Panc1 (cell line): ENCODE measurements at regions of chr1 and their contacts with region 1.

Region 1: DNA sequence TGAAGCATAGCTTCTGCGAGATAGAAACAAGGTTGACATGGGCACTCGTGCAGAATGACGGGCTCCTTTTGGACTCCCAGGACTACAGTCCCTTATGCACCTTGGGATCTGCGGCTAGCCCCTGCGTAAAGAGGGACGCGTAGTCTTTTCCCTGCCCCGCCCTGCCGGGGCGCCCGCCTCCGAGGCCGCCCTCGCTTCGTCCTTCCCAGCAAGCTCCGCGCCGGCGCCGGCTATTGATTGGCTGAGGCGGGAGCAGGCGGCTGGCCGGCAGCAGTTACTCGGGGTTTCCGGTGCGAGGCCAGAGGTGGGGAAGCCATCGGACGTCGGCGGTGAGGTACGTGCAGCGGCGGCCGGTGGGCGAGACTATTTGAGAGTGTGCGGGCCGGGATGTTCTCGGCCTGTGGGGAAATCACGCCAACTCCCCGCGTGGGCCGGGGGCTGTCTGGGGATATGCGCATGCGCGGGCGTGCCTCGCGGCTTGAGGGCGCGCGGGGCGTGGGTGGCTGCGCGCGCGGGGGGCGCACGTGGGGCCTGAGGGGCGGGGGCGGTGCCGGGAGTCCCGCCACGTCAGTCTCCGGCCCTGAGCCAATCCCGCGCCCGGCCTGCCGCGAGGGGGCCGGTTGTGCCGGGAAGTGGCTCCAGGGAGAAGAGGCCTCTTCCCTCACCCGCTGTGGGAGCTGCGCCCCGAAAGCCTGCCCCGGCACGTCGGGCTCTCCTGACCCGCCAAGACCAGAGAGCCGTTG is at the start of gene TXLNA:
- DNase-seq: peak; percentile 63
- ATAC-seq: peak; percentile 96
- H3K4me3 ChIP-seq: peak within 1 kb of the TSS; percentile 77 to 93
- H3K27ac ChIP-seq: peak within 1 kb of the TSS; percentile 97
- H3K4me1 ChIP-seq: peaks cover 33% of the 10 kb centered on the region
- H3K27me3 ChIP-seq: no peaks in the 10 kb centered on the region
- CTCF ChIP-seq: no peak
- total RNA-seq, gene TXLNA: 115 TPM

Region 2: GRCh38 chr1:32031578-32032274 is 147.9 kb before region 1 on chr1:
- CTCF ChIA-PET with region 1: no interaction called
- POLR2A ChIA-PET with region 1: no interaction called
- in situ Hi-C with region 1: no loop called
- intact Hi-C with region 1: no loop called
- DNase-seq: no peak
- ATAC-seq: no peak
- H3K4me3 ChIP-seq: no peak overlapping the region
- H3K27ac ChIP-seq: no peak overlapping the region
- H3K4me1 ChIP-seq: peaks cover 3% of the 10 kb centered on the region; the same call in 1 of the 2 replicates
- H3K27me3 ChIP-seq: no peaks in the 10 kb centered on the region
- CTCF ChIP-seq: no peak

Region 3: GRCh38 chr1:32100807-32101697 is 78.6 kb before region 1 on chr1:
- CTCF ChIA-PET with region 1: no interaction called
- POLR2A ChIA-PET with region 1: no interaction called
- in situ Hi-C with region 1: no loop called
- intact Hi-C with region 1: no loop called
- DNase-seq: no peak
- ATAC-seq: no peak
- H3K4me3 ChIP-seq: no peak overlapping the region
- H3K27ac ChIP-seq: no peak overlapping the region
- H3K4me1 ChIP-seq: no peaks in the 10 kb centered on the region
- H3K27me3 ChIP-seq: no peaks in the 10 kb centered on the region
- CTCF ChIP-seq: no peak

Region 4: DNA sequence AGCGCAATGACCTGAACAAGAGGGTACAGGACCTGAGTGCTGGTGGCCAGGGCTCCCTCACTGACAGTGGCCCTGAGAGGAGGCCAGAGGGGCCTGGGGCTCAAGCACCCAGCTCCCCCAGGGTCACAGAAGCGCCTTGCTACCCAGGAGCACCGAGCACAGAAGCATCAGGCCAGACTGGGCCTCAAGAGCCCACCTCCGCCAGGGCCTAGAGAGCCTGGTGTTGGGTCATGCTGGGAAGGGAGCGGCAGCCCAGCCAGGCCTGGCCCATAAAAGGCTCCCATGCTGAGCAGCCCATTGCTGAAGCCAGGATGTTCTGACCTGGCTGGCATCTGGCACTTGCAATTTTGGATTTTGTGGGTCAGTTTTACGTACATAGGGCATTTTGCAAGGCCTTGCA is 15.4 kb after region 1 on chr1:
- CTCF ChIA-PET with region 1: no interaction called
- POLR2A ChIA-PET with region 1: interaction called, 19 read pairs
- in situ Hi-C with region 1: no loop called
- intact Hi-C with region 1: no loop called
- DNase-seq: no peak
- ATAC-seq: no peak
- H3K4me3 ChIP-seq: no peak overlapping the region
- H3K27ac ChIP-seq: no peak overlapping the region
- H3K4me1 ChIP-seq: peaks cover 33% of the 10 kb centered on the region
- H3K27me3 ChIP-seq: no peaks in the 10 kb centered on the region
- CTCF ChIP-seq: no peak